Activated CD8-positive, alpha-beta T cell treated with anti-CD3 and anti-CD28 coated beads for 36 hours (primary cell): ENCODE measurements at regions of chr13 and their contacts with region 1.

Region 1: DNA sequence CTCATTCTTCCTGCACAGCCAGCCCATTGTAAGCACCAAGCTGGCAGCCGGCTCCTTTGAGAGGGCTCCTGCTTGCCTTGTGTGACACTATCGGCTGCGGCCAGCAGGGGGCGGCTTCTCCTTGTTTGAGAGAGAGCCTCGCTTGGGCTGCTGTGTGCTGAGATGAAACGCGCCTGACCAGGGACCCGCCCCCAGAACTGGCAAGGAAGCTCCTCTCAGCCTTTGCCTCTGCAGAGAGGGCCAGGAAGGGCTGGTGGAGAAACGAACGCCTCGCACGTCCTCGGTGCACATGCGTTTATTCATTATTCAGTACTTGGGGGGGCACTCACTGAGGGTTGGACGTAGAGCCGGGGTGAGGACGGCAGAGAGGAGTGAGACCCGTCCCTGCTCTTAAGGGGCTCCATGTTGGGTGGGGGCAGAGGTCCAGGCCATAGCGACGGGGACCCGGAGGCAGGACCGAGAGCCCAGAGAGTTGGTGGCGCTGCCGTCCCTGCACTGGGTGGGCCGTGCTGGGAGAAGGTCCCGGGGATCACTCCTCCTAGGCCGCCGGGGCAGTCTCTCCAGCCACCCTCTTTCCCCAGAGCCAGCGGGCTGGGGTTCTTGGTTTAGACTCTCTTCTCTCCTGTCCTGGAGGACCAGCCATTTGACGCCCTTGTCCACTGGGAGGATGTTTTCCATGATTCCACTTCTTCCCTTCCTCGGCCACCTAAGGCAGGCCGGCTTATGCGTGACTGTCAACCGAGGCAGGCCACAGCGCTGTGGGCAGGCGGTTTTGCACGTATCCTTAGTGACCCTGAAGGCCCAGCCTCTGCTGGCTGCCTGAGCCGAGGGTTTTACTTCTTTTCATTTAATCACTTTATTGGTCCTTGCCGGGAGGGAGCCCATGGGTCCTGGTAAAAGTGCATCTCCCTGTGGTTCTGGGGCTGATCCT is 174.5 kb downstream of the KATNAL1 start:
- DNase-seq: peak; percentile 99
- ATAC-seq: peak; percentile 100
- H3K4me3 Mint-ChIP-seq: no peak overlapping the region
- H3K27ac Mint-ChIP-seq: peak overlapping the region; percentile 16
- H3K4me1 Mint-ChIP-seq: peaks cover 12% of the 10 kb centered on the region
- H3K27me3 Mint-ChIP-seq: no peaks in the 10 kb centered on the region
- CTCF ChIP-seq: peak; percentile 80

Region 2: GRCh38 chr13:30158774-30159445 is 26.0 kb after region 1 on chr13:
- CTCF ChIA-PET with region 1: interaction called, 109 read pairs
- POLR2A ChIA-PET with region 1: interaction called, 4 read pairs
- intact Hi-C with region 1: loop called (anchors 2 kb)
- DNase-seq: peak; percentile 16
- ATAC-seq: peak; percentile 37
- H3K4me3 Mint-ChIP-seq: no peak overlapping the region
- H3K27ac Mint-ChIP-seq: peak overlapping the region; percentile 60
- H3K4me1 Mint-ChIP-seq: peaks cover 34% of the 10 kb centered on the region
- H3K27me3 Mint-ChIP-seq: no peaks in the 10 kb centered on the region
- CTCF ChIP-seq: peak; percentile 29

Region 3: DNA sequence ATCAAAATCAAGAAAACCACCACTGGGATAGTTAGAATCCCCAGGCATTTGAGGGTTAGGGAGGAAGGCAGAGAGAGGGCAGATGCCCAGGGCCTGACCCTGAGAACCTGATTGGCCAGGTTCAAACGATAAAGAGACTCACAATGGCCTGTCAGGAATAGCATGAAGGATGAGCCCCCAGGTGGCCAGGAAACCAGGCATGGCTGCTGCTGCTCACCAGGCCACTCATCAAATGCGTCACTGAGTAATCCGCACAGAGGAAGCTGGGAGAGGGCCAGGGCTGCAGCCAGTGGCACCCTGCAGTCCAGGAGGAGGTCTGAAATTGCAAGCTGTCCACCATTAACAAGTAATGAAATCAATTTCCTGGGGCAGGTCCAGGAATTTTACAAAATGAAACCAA is 63.1 kb after region 1 on chr13:
- CTCF ChIA-PET with region 1: interaction called, 19 read pairs
- POLR2A ChIA-PET with region 1: no interaction called
- intact Hi-C with region 1: no loop called
- DNase-seq: no peak
- ATAC-seq: no peak
- H3K4me3 Mint-ChIP-seq: no peak overlapping the region
- H3K27ac Mint-ChIP-seq: no peak overlapping the region
- H3K4me1 Mint-ChIP-seq: no peaks in the 10 kb centered on the region
- H3K27me3 Mint-ChIP-seq: no peaks in the 10 kb centered on the region
- CTCF ChIP-seq: no peak

Region 4: GRCh38 chr13:30306762-30307193 is 173.9 kb after region 1 on chr13:
- CTCF ChIA-PET with region 1: interaction called, 46 read pairs
- POLR2A ChIA-PET with region 1: no interaction called
- intact Hi-C with region 1: no loop called
- DNase-seq: peak; percentile 92
- ATAC-seq: peak; percentile 89
- H3K4me3 Mint-ChIP-seq: peak overlapping the region; percentile 81
- H3K27ac Mint-ChIP-seq: peak overlapping the region; percentile 79
- H3K4me1 Mint-ChIP-seq: peaks cover 17% of the 10 kb centered on the region
- H3K27me3 Mint-ChIP-seq: no peaks in the 10 kb centered on the region
- CTCF ChIP-seq: no peak

Region 5: GRCh38 chr13:30355384-30355699 is 222.5 kb after region 1 on chr13:
- CTCF ChIA-PET with region 1: interaction called, 10 read pairs
- POLR2A ChIA-PET with region 1: no interaction called
- intact Hi-C with region 1: no loop called
- DNase-seq: peak; percentile 73
- ATAC-seq: peak; percentile 96
- H3K4me3 Mint-ChIP-seq: no peak overlapping the region
- H3K27ac Mint-ChIP-seq: no peak overlapping the region
- H3K4me1 Mint-ChIP-seq: peaks cover 16% of the 10 kb centered on the region
- H3K27me3 Mint-ChIP-seq: no peaks in the 10 kb centered on the region
- CTCF ChIP-seq: peak; percentile 64

Region 6: GRCh38 chr13:30581582-30581981 is 448.7 kb after region 1 on chr13:
- CTCF ChIA-PET with region 1: interaction called, 13 read pairs
- POLR2A ChIA-PET with region 1: no interaction called
- intact Hi-C with region 1: loop called (anchors 10 kb)
- DNase-seq: peak; percentile 16
- ATAC-seq: no peak
- H3K4me3 Mint-ChIP-seq: no peak overlapping the region
- H3K27ac Mint-ChIP-seq: no peak overlapping the region
- H3K4me1 Mint-ChIP-seq: peaks cover 16% of the 10 kb centered on the region
- H3K27me3 Mint-ChIP-seq: peaks cover 1% of the 10 kb centered on the region
- CTCF ChIP-seq: peak; percentile 14